ENCODE measurements at regions of chr10 and their contacts with region 1.

Region 1: GRCh38 chr10:35027567-35027966 is 62.6 kb downstream of the CUL2 start:
- DNase-seq: no peak
- H3K4me3 ChIP-seq: no peak overlapping the region
- H3K27ac ChIP-seq: no peak overlapping the region
- H3K27me3 ChIP-seq: no peaks in the 10 kb centered on the region
- CTCF ChIP-seq: peak; percentile 57

Region 2: GRCh38 chr10:34666008-34666705 is 361.4 kb before region 1 on chr10:
- CTCF ChIA-PET with region 1: interaction called, 29 read pairs
- POLR2A ChIA-PET with region 1: no interaction called
- DNase-seq: peak; percentile 81
- H3K4me3 ChIP-seq: no peak overlapping the region
- H3K27ac ChIP-seq: no peak overlapping the region
- H3K27me3 ChIP-seq: no peaks in the 10 kb centered on the region
- CTCF ChIP-seq: peak; percentile 73

Region 3: GRCh38 chr10:34906067-34906965 is 121.3 kb before region 1 on chr10:
- CTCF ChIA-PET with region 1: no interaction called
- POLR2A ChIA-PET with region 1: no interaction called
- DNase-seq: no peak
- H3K4me3 ChIP-seq: no peak overlapping the region
- H3K27ac ChIP-seq: no peak overlapping the region
- H3K27me3 ChIP-seq: no peaks in the 10 kb centered on the region
- CTCF ChIP-seq: no peak

Region 4: GRCh38 chr10:34994565-34995142 is 32.9 kb before region 1 on chr10:
- CTCF ChIA-PET with region 1: interaction called, 40 read pairs
- POLR2A ChIA-PET with region 1: no interaction called
- DNase-seq: peak; percentile 37
- H3K4me3 ChIP-seq: no peak overlapping the region
- H3K27ac ChIP-seq: no peak overlapping the region
- H3K27me3 ChIP-seq: no peaks in the 10 kb centered on the region
- CTCF ChIP-seq: peak; percentile 77

Region 5: DNA sequence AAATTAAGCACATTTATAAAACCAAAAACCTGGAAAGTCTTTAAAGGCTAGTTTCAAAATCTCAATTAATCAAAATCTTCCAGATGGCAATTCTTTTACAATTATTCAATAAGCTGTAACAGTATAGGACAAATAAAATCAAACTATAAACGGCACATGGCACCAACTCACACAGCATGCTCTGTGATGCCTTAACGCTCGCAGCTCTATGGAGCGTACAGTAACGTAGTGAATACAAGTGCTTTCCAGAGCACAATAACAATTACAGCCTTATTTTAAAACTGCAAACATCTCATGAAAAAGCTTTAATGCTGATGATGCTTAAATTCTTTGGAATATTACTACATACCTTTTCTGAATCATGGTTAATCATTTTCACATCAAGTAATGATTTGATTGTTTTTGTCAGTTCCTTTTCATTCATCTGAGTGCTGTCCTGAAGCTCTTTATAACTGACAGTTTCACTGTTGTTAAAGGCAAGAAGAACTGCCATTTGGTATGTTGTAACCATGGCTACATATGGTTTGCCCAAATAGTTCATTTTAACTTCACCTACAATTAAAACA is 11.6 kb before region 1 on chr10:
- CTCF ChIA-PET with region 1: interaction called, 10 read pairs
- POLR2A ChIA-PET with region 1: interaction called, 3 read pairs
- DNase-seq: no peak
- H3K4me3 ChIP-seq: no peak overlapping the region
- H3K27ac ChIP-seq: no peak overlapping the region
- H3K27me3 ChIP-seq: no peaks in the 10 kb centered on the region
- CTCF ChIP-seq: no peak